Ascending aorta (tissue), 2 donors: ENCODE measurements at regions of chr18 and their contacts with region 1.

Region 1: GRCh38 chr18:59402432-59403090 is 43.5 kb upstream of the LMAN1 start:
- DNase-seq: peak in 1 of 2 donors; percentile 67
- H3K4me3 ChIP-seq: no peak overlapping the region
- H3K27ac ChIP-seq: no peak overlapping the region
- H3K4me1 ChIP-seq: no peaks in the 10 kb centered on the region
- H3K27me3 ChIP-seq: no peaks in the 10 kb centered on the region
- CTCF ChIP-seq: peak; percentile 64 to 91 (median 90)

Region 2: GRCh38 chr18:59249205-59249774 is 153.3 kb before region 1 on chr18:
- intact Hi-C with region 1: loop called (anchors 2 kb)
- DNase-seq: no peak
- H3K4me3 ChIP-seq: no peak overlapping the region
- H3K27ac ChIP-seq: no peak overlapping the region
- H3K4me1 ChIP-seq: no peaks in the 10 kb centered on the region
- H3K27me3 ChIP-seq: no peaks in the 10 kb centered on the region
- CTCF ChIP-seq: peak; percentile 17 to 60 (median 55)

Region 3: GRCh38 chr18:59308248-59308937 is 94.2 kb before region 1 on chr18:
- intact Hi-C with region 1: loop called (anchors 2 kb)
- DNase-seq: peak in 1 of 2 donors; percentile 73
- H3K4me3 ChIP-seq: peak overlapping the region in 1 of 2 donors; percentile 39
- H3K27ac ChIP-seq: no peak overlapping the region
- H3K4me1 ChIP-seq: no peaks in the 10 kb centered on the region
- H3K27me3 ChIP-seq: no peaks in the 10 kb centered on the region
- CTCF ChIP-seq: peak; percentile 54 to 87 (median 72)